ENCODE measurements at regions of chr6 and their contacts with region 1.

Region 1: GRCh38 chr6:1596088-1596852 is 13.4 kb upstream of the FOXC1 start:
- DNase-seq: peak; percentile 46
- H3K4me3 ChIP-seq: peak overlapping the region; percentile 39
- H3K27ac ChIP-seq: no peak overlapping the region
- H3K4me1 ChIP-seq: peaks cover 10% of the 10 kb centered on the region
- H3K27me3 ChIP-seq: peaks cover 73% of the 10 kb centered on the region
- CTCF ChIP-seq: peak; percentile 98

Region 2: GRCh38 chr6:1449896-1450295 is 146.4 kb before region 1 on chr6:
- intact Hi-C with region 1: no loop called
- DNase-seq: no peak
- H3K4me3 ChIP-seq: no peak overlapping the region
- H3K27ac ChIP-seq: no peak overlapping the region
- H3K4me1 ChIP-seq: no peaks in the 10 kb centered on the region
- H3K27me3 ChIP-seq: peaks cover 66% of the 10 kb centered on the region
- CTCF ChIP-seq: no peak

Region 3: DNA sequence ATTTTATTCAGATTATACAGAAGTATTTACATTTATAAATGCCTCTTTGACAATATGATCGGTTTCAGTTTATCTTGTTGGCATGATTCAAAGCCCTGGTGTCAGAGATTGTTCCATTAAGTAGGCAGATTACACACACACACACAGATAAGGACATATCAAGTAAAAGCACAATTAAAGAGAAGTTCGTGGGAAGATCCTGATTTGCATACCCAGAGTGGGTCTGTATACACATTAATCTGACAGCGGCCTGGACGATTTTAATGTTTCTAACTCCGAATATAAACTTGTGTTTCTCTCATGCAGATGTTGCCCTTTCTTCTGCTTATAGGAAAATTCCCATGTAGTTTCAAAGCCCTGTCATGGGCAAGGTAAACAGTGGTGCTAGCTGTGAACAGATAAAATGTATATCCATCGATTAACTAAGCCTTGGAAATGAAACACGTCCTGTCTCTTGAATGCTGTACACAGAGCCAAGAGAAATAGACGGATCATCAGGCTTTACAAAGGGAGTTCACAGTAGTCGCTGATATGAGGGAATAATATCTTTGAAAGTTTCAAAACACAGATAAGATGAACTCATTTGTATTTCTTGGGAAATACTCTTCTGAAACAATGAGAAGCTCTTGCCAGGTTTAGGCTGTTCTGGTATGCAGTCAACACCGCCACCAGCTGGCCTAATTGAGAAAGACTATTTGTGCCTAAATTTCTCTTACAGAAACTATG is 757.3 kb after region 1 on chr6:
- intact Hi-C with region 1: loop called (anchors 5 kb)
- DNase-seq: peak; percentile 37
- H3K4me3 ChIP-seq: no peak overlapping the region
- H3K27ac ChIP-seq: no peak overlapping the region
- H3K4me1 ChIP-seq: peaks cover 3% of the 10 kb centered on the region
- H3K27me3 ChIP-seq: no peaks in the 10 kb centered on the region
- CTCF ChIP-seq: peak; percentile 85

Region 4: DNA sequence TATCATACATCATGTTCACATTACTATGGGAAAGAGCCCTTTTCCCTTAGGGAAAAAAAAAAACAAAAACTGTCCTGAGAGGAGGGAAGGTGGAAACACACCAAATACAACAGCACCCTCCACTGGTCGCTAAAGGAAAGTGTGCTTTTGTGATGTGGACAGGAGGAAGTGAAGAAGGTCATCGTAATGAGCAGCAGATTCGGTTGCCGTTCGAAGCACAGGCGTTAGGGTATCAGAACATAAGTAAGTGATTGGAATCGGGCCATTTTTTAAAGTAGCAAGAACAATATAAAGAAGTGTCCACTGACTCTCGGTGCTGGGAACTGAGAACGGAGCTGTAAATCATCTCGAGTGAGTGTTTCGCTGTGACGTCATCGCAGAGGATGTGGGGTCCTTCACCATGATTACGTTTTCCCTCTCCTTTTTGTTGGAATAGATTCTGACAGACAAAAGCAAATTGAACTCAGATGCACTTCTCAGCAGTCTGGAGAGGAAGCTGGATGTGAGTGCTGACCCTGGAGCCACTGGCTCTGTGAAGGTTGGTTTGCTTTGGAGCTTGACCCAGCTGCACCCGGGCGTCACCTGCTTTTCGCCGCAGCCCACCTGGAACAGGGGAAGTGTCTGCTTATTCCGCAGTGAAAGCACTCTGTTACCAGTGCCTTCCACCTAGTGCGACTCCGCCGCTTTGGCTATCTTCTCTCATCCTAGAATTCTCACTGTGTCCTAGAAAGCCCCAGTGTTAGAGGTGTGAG is 852.7 kb after region 1 on chr6:
- intact Hi-C with region 1: loop called (anchors 10 kb)
- DNase-seq: no peak
- H3K4me3 ChIP-seq: no peak overlapping the region
- H3K27ac ChIP-seq: no peak overlapping the region
- H3K4me1 ChIP-seq: peaks cover 13% of the 10 kb centered on the region
- H3K27me3 ChIP-seq: no peaks in the 10 kb centered on the region
- CTCF ChIP-seq: peak; percentile 69

Region 5: GRCh38 chr6:2634139-2634964 is 1038.1 kb after region 1 on chr6:
- intact Hi-C with region 1: loop called (anchors 10 kb)
- DNase-seq: peak; percentile 86
- H3K4me3 ChIP-seq: peak overlapping the region; percentile 71
- H3K27ac ChIP-seq: peak overlapping the region; percentile 79
- H3K4me1 ChIP-seq: peaks cover 26% of the 10 kb centered on the region
- H3K27me3 ChIP-seq: peaks cover 3% of the 10 kb centered on the region
- CTCF ChIP-seq: peak; percentile 99

Region 6: GRCh38 chr6:2695454-2696095 is 1099.3 kb after region 1 on chr6:
- intact Hi-C with region 1: loop called (anchors 5 kb)
- DNase-seq: no peak
- H3K4me3 ChIP-seq: no peak overlapping the region
- H3K27ac ChIP-seq: no peak overlapping the region
- H3K4me1 ChIP-seq: no peaks in the 10 kb centered on the region
- H3K27me3 ChIP-seq: no peaks in the 10 kb centered on the region
- CTCF ChIP-seq: peak; percentile 57

Region 7: GRCh38 chr6:2749969-2750600 is 1153.8 kb after region 1 on chr6:
- intact Hi-C with region 1: loop called (anchors 5 kb)
- DNase-seq: peak; percentile 51
- H3K4me3 ChIP-seq: peak overlapping the region; percentile 41
- H3K27ac ChIP-seq: no peak overlapping the region
- H3K4me1 ChIP-seq: peaks cover 21% of the 10 kb centered on the region
- H3K27me3 ChIP-seq: no peaks in the 10 kb centered on the region
- CTCF ChIP-seq: peak; percentile 92

Measured in left ventricle myocardium inferior (tissue), 1 donor.